Mammary epithelial cell (primary cell): ENCODE measurements at regions of chr1 and their contacts with region 1.

Region 1: DNA sequence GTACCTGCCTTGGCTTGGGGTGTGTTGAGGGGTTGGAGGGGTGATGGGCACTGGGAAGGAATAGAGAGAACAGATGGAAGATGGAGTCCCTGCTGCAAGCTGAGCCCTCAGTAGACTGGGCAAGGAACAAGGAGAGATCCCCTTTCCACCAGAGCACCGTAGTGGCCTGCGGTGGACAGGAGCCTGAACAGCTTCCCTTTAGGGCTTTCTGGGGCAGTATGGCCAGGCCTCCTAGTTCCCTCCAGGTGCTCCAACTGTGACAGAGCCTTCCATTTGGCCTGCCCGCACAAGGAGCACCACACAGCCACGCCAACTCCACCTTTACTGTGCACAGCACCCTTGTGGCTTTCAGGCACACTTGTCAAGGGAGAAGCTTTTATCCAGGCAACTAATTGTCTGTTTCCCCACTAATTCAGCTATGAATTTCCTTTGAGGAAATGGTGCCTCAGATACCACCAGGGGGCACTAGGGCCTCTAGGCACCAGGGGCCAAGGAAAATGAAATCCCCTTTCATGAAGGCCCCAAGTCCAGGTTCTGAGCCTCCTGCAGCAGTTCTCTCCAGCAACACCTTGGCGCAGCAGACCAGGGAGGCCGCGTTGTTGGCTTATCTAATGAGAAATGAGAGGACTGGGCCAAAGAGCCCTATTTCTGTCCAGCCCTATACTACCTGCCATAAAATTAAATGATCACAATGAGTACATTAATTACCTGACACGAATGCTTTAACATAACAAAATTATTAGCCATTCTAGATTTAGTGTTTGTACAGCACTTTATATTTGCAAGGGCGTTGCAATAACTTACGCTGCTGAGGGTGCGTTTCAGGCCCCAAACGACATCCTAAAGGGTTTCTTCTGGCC is 23.1 kb upstream of the ERI3 start:
- DNase-seq: peak; percentile 15
- H3K4me3 ChIP-seq: no peak overlapping the region
- H3K27ac ChIP-seq: no peak overlapping the region
- H3K4me1 ChIP-seq: no peaks in the 10 kb centered on the region
- H3K27me3 ChIP-seq: peaks cover 4% of the 10 kb centered on the region
- CTCF ChIP-seq: peak; percentile 75 to 81

Region 2: GRCh38 chr1:44084998-44085675 is 293.0 kb before region 1 on chr1:
- CTCF ChIA-PET with region 1: no interaction called
- dilution Hi-C with region 1: no loop called
- in situ Hi-C with region 1: no loop called
- intact Hi-C with region 1: no loop called
- DNase-seq: peak; percentile 44
- H3K4me3 ChIP-seq: no peak overlapping the region
- H3K27ac ChIP-seq: no peak overlapping the region
- H3K4me1 ChIP-seq: peaks cover 9% of the 10 kb centered on the region
- H3K27me3 ChIP-seq: no peaks in the 10 kb centered on the region
- CTCF ChIP-seq: no peak

Region 3: DNA sequence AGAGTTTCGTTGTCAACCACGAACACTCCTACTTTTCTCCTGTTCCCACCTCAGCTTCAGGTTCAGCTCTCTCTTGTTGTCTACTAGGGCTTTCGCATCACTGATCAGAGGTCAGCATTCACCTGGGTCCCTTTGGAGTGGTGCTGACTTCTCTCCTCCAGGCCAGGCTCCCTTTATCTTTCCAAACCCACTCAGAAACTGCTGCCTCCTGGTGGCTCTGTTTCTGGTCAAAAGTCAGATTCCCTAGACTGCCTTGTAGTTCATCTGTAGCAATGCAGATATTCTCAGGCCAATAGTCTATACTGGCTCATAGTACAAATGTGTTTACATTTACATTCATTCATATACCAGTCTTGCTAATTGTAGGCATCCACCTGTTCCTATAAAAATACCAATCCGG is 16.7 kb before region 1 on chr1:
- CTCF ChIA-PET with region 1: no interaction called
- dilution Hi-C with region 1: no loop called
- in situ Hi-C with region 1: no loop called
- intact Hi-C with region 1: no loop called
- DNase-seq: no peak
- H3K4me3 ChIP-seq: no peak overlapping the region
- H3K27ac ChIP-seq: no peak overlapping the region
- H3K4me1 ChIP-seq: no peaks in the 10 kb centered on the region
- H3K27me3 ChIP-seq: peaks cover 3% of the 10 kb centered on the region
- CTCF ChIP-seq: no peak

Region 4: GRCh38 chr1:44484155-44484688 is 106.1 kb after region 1 on chr1:
- CTCF ChIA-PET with region 1: no interaction called
- dilution Hi-C with region 1: no loop called
- in situ Hi-C with region 1: no loop called
- intact Hi-C with region 1: no loop called
- DNase-seq: peak; percentile 29
- H3K4me3 ChIP-seq: no peak overlapping the region
- H3K27ac ChIP-seq: no peak overlapping the region
- H3K4me1 ChIP-seq: peaks cover 21% of the 10 kb centered on the region
- H3K27me3 ChIP-seq: peaks cover 2% of the 10 kb centered on the region
- CTCF ChIP-seq: peak in 1 of 2 donors; percentile 11

Region 5: DNA sequence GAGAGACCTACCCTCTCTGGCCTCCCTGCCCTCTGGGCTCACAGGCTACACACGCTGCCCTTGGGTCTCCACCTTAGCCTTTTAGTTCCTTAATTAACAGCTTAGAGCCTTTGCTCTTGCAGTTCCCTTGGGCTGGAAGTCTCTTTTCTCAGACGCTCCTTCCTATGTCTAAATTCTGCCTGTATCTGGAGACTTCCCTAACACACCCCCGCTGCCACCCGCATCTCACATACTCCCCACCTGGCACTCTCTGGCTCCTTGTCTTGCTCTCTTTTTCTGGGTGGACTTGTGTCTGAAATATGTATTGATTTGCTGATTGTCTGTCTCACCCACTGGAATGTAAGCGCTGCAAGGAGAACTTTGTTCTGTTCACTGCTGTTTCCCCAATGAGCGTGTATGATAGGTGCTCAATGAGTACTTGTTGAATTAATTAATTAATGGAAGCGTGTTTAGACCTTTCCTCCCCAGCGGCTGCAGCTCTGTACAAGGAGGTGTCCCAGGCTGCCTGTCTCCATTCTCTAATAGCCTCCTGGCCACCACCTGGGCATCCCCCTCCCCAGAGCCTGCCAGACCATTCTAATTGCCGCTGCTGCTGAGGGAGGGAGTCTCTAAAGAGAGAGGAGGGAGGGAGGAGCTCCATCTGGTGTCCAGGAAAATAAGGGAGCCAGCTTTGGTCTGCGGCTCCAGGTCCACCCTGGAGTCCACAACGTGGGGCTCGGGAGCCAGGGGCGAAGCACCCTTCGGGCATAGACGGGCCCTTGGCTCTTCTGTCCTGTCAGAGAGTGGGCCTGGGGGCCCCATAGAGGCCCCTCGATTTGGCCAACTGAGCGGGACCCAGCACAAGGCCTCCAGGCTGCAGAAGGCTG is 122.3 kb after region 1 on chr1:
- CTCF ChIA-PET with region 1: no interaction called
- dilution Hi-C with region 1: no loop called
- in situ Hi-C with region 1: no loop called
- intact Hi-C with region 1: loop called (anchors 1 kb)
- DNase-seq: no peak
- H3K4me3 ChIP-seq: no peak overlapping the region
- H3K27ac ChIP-seq: no peak overlapping the region
- H3K4me1 ChIP-seq: no peaks in the 10 kb centered on the region
- H3K27me3 ChIP-seq: no peaks in the 10 kb centered on the region
- CTCF ChIP-seq: peak in 1 of 2 donors; percentile 48